Left lung (tissue), 14 donors: ENCODE measurements at regions of chr1 and their contacts with region 1.

Region 1: GRCh38 chr1:246549665-246550064 is 16.4 kb downstream of the TFB2M start:
- DNase-seq: no peak
- ATAC-seq: no peak
- H3K4me3 ChIP-seq: no peak overlapping the region
- H3K27ac ChIP-seq: no peak overlapping the region
- H3K4me1 ChIP-seq: no peaks in the 10 kb centered on the region
- H3K27me3 ChIP-seq: no peaks in the 10 kb centered on the region
- CTCF ChIP-seq: no peak

Region 2: DNA sequence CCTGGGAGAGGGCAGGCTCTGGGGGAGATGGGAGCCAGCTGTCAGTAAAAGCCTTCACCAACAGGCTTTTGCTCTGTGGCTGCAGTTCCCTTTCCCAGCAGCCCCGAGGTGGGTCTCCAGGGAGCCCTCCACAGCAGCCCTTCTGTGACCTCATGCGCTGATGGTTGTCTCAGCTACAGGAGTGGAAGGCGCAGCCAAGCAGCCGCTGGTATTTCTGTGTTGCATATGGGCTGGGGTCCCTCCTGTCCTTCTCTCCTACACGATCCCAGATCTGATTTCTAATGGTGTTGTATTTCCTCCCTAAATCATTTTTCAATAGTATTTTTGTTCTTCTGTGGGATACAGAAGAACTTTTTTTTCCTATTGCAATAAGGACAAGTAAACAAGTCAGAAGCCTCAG is 132.2 kb after region 1 on chr1:
- intact Hi-C with region 1: loop called in 1 of 2 experiments (anchors 2 kb)
- DNase-seq: peak in 1 of 4 donors; percentile 41
- ATAC-seq: no peak
- H3K4me3 ChIP-seq: no peak overlapping the region
- H3K27ac ChIP-seq: no peak overlapping the region
- H3K4me1 ChIP-seq: no peaks in the 10 kb centered on the region
- H3K27me3 ChIP-seq: no peaks in the 10 kb centered on the region
- CTCF ChIP-seq: no peak

Region 3: DNA sequence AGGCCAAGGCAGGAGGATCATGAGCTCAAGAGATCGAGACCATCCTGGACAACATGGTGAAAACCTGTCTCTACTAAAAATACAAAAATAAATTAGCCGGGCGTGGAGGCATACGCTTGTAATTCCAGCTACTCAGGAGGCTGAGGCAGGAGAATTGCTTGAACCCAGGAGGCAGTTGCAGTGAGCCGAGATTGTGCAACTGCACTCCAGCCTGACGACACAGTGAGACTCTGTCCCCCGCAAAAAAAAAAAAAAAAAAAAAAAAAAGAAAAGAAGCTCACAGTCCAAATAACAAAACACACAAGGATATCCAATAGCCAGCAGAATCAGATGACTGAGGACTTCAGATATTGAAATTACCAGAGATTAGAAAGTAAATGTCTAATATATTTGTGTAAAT is 370.2 kb after region 1 on chr1:
- intact Hi-C with region 1: no loop called
- DNase-seq: no peak
- ATAC-seq: no peak
- H3K4me3 ChIP-seq: no peak overlapping the region
- H3K27ac ChIP-seq: no peak overlapping the region
- H3K4me1 ChIP-seq: peaks cover 0 to 33% of the 10 kb centered on the region in 2 donors
- H3K27me3 ChIP-seq: no peaks in the 10 kb centered on the region
- CTCF ChIP-seq: no peak